BJ (cell line): ENCODE measurements at regions of chr16 and their contacts with region 1.

Region 1: DNA sequence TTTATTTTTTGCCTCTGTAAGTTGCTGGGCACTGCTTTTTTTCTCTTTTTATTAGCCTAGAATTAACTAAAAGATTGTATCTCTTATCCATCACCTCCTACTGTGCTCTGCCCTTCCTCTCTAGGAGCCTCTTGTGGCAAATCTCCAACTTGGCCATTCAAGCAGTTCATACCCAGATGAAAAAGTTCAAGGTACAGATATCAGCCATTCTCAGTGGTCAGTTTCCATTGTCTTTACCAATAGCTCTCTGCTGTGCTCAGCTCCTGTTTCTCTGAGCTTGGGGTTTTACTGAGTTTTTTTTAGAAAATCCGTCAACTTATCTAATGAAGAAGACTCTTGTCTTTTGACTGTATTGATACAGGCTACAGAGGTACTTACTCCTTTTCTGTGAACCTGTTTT is 15.6 kb downstream of the MOSMO start:
- DNase-seq: no peak
- H3K4me3 ChIP-seq: no peak overlapping the region
- H3K27me3 ChIP-seq: no peaks in the 10 kb centered on the region
- CTCF ChIP-seq: no peak

Region 2: DNA sequence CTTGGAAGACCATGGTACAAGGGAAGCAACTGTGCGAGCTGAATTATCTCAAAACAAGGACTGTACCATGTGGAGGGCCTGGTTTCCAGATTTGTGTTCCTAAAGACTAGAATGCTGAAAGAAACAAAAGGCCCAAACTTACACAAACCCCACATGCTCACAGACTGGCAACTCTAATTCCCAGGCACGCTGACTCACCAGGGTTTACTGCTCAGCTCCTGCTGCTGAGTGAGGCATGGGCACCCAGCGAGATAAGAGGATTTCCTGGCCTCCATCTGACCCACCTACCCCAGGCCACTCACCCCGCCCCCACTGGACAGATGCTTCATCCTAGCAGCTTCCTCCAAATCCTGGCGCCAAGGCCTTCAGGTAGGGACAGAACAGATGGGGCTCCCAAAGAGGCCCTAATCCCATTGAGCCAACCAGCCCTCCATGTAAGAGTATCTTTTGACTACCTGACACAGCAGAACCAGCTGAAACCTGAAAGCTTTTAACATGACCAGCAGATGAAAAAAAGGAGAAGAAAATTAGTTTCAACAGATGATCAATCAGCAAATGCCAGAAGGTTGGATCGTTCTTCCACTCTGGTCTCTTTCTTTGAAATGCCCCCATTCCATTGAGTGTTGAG is 1157.2 kb before region 1 on chr16:
- CTCF ChIA-PET with region 1: no interaction called
- POLR2A ChIA-PET with region 1: no interaction called
- DNase-seq: peak; percentile 29
- H3K4me3 ChIP-seq: no peak overlapping the region
- H3K27me3 ChIP-seq: no peaks in the 10 kb centered on the region
- CTCF ChIP-seq: no peak

Region 3: GRCh38 chr16:21994856-21995465 is 28.5 kb before region 1 on chr16:
- CTCF ChIA-PET with region 1: no interaction called
- POLR2A ChIA-PET with region 1: no interaction called
- DNase-seq: no peak
- H3K4me3 ChIP-seq: no peak overlapping the region
- H3K27me3 ChIP-seq: no peaks in the 10 kb centered on the region
- CTCF ChIP-seq: no peak

Region 4: GRCh38 chr16:22007509-22008214 is 15.8 kb before region 1 on chr16 and contains the start of gene MOSMO:
- CTCF ChIA-PET with region 1: no interaction called
- POLR2A ChIA-PET with region 1: interaction called, 12 read pairs
- DNase-seq: no peak
- H3K4me3 ChIP-seq: peak within 1 kb of the TSS; percentile 94
- H3K27me3 ChIP-seq: no peaks in the 10 kb centered on the region
- CTCF ChIP-seq: no peak
- polyA plus RNA-seq, gene MOSMO: 7.3 and 11.6 TPM in 2 replicates

Region 5: DNA sequence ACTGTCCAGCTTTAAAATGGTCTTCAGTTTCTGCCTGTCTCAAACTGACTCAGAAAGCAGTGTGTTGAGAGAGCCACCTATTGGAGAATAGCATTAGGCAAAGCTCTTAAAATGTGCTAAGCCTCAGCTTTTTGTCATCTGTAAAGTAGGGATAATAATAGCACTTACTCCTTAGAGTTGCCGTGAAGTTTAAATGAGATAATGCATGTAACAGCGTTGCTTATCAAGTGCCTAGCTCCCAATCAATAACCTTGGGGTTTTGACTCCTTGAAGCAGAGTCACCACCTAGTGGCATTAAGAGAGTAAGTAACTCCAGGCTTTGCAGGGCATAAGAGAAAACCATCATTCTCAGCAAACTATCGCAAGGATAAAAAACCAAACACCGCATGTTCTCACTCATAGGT is 953.8 kb after region 1 on chr16:
- CTCF ChIA-PET with region 1: no interaction called
- POLR2A ChIA-PET with region 1: no interaction called
- DNase-seq: no peak
- H3K4me3 ChIP-seq: no peak overlapping the region
- H3K27me3 ChIP-seq: no peaks in the 10 kb centered on the region
- CTCF ChIP-seq: no peak